Activated T-helper 2 cell treated with anti-CD3 and anti-CD28 coated beads, Interferon-gamma antibody, Interleukin-2, Interleukin-4, amounts not matched to agents 10 μg/mL and 5 μg/mL and 100 μg/mL, durations not matched to agents 14 hours and 24 hours and 36 hours (primary cell): ENCODE measurements at regions of chr17 and their contacts with region 1.

Region 1: DNA sequence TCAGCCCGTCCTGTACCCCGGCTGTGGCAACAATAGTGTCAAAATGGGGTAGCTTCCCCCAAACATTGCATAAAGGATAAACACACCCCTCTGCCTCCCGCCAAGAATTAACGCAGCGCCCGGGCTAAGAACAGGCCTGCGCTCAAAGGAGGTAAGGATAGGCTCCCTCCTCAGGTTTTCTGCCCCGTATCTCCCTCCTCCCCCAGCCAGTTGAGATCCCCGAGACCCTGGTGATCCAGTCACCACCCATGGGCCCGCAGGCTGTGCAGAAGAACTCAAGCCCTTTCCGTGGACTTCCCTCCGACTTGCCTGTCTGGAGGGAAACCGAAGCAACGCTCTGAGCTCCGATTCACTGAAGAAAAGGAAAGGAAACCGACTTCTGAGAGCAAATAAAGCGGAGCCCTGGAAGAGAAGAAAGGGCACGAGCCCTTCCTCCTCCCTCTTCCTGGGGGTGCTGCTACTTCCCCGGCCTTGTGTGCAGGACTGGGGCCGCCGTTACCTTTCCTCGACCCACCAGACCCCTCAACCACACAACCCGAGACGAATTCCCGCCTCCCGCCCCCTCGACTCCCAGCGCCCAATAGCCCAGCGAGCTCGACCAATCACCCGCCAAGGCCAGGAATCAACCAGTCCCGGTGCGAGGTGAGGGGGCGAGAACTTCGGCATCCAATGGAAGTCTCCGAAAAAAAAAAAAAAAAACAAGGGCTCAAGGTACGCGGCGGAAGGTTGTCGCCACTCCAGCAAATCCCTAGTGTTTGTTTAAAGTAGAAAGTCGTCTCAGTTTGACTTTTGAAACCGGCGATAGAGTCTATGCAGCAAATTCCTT is at the start of gene BRIP1:
- DNase-seq: peak; percentile 87
- H3K4me3 Mint-ChIP-seq: peak within 1 kb of the TSS; percentile 93
- H3K27ac Mint-ChIP-seq: peak within 1 kb of the TSS; percentile 94
- H3K4me1 Mint-ChIP-seq: peaks cover 36% of the 10 kb centered on the region
- H3K27me3 Mint-ChIP-seq: no peaks in the 10 kb centered on the region
- total RNA-seq, gene BRIP1: 16.4 and 16.9 TPM in 2 replicates

Region 2: GRCh38 chr17:61927200-61928165 is 64.3 kb after region 1 on chr17 and contains the start of gene INTS2:
- intact Hi-C with region 1: loop called (anchors 2 kb)
- DNase-seq: peak; percentile 92
- H3K4me3 Mint-ChIP-seq: peak within 1 kb of the TSS; percentile 94
- H3K27ac Mint-ChIP-seq: peak within 1 kb of the TSS; percentile 94
- H3K4me1 Mint-ChIP-seq: peaks cover 18% of the 10 kb centered on the region
- H3K27me3 Mint-ChIP-seq: no peaks in the 10 kb centered on the region
- total RNA-seq, gene INTS2: 28.4 and 29.2 TPM in 2 replicates

Region 3: GRCh38 chr17:62164763-62165753 is 301.9 kb after region 1 on chr17:
- intact Hi-C with region 1: no loop called
- DNase-seq: no peak
- H3K4me3 Mint-ChIP-seq: no peak overlapping the region
- H3K27ac Mint-ChIP-seq: no peak overlapping the region
- H3K4me1 Mint-ChIP-seq: peaks cover 6% of the 10 kb centered on the region
- H3K27me3 Mint-ChIP-seq: peaks cover 7% of the 10 kb centered on the region